Lower leg skin (tissue), 4 donors: ENCODE measurements at regions of chr5 and their contacts with region 1.

Region 1: GRCh38 chr5:75236322-75237316 is at the start of gene ANKRD31:
- DNase-seq: peak; percentile 71 to 96
- H3K4me3 ChIP-seq: peak within 1 kb of the TSS; percentile 53
- CTCF ChIP-seq: no peak
- POLR2A ChIP-seq: no peak
- total RNA-seq, gene ANKRD31: 0.13 to 0.20 (median 0.19) TPM in 3 of 4 donors, not detected in the other

Region 2: GRCh38 chr5:73448463-73449136 is 1788.0 kb before region 1 on chr5 and contains the start of gene FOXD1:
- intact Hi-C with region 1: no loop called
- DNase-seq: peak; percentile 58 to 95
- H3K4me3 ChIP-seq: peak within 1 kb of the TSS; percentile 25
- CTCF ChIP-seq: no peak
- POLR2A ChIP-seq: no peak
- total RNA-seq, gene FOXD1: 0.63 to 2.2 (median 1.8) TPM

Region 3: DNA sequence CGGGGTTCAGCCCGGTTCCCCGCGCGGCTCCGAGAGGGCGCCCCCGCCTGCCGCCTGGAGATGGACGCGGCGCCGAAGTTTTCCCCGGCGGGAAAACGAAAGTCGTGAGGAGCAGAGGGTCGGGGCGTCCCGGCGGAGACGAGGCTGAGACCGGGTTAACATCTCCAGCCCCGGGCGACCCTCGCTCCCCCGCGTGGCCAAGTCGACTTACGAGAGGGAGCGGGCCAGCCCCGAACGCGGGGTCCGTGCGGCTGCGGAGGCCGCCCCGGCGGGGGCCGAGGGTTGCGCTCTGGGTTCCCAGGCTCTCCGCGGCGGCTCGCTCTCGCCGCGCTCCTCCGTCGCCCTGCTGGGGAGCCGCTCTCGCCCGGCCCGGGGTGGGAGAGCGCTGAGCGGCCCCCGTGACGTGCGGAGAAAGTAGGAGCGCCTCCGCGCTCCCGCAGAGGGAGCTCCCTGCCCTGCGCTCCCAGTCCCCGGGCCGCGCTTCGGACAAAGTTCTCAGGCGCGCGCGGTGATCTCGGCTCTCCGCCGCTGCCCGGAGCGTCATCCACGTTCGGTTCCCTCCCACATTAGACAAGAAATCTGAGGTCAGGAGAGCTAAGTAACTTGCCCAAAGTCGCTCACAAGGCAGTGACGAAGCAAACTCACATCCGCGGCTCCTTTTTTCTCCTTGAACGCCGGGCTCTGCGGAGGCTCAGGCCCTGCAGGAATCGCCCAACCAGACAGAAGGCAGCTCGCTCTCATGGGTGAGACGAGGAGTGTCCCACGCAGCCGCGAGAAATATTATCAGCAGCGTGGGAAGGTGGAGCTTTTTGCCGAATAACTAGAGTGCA is 183.1 kb before region 1 on chr5:
- intact Hi-C with region 1: loop called (anchors 10 kb)
- DNase-seq: peak; percentile 42 to 90
- H3K4me3 ChIP-seq: peak overlapping the region; percentile 56
- CTCF ChIP-seq: no peak
- POLR2A ChIP-seq: no peak

Region 4: GRCh38 chr5:75336625-75337339 is 100.2 kb after region 1 on chr5 and contains the start of gene HMGCR:
- intact Hi-C with region 1: loop called (anchors 5 kb)
- DNase-seq: peak; percentile 99 to 100
- H3K4me3 ChIP-seq: peak within 1 kb of the TSS; percentile 93
- CTCF ChIP-seq: peak in 1 of 3 donors; percentile 7
- POLR2A ChIP-seq: no peak
- total RNA-seq, gene HMGCR: 101 to 119 (median 103) TPM

Region 5: DNA sequence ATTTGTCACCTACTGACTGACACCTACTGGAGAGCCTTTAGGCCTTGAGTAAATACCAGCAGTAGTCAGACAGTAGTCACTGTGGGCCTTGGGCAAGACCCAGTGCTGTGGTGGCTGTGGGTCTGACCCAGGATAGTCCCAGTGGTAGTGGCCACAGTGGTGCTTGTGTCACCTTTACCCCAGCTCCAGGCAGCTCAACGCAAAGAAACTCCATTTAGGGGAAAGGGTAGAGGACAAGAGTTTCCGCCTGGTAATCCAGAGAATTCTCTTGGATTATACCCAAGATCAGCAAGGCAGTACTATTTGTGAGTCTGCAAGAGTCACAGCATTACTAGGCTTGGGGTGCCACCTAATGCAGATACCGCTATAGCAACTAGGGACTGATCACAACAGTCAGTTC is 245.9 kb after region 1 on chr5:
- intact Hi-C with region 1: no loop called
- DNase-seq: no peak
- H3K4me3 ChIP-seq: no peak overlapping the region
- CTCF ChIP-seq: no peak
- POLR2A ChIP-seq: no peak

Region 6: DNA sequence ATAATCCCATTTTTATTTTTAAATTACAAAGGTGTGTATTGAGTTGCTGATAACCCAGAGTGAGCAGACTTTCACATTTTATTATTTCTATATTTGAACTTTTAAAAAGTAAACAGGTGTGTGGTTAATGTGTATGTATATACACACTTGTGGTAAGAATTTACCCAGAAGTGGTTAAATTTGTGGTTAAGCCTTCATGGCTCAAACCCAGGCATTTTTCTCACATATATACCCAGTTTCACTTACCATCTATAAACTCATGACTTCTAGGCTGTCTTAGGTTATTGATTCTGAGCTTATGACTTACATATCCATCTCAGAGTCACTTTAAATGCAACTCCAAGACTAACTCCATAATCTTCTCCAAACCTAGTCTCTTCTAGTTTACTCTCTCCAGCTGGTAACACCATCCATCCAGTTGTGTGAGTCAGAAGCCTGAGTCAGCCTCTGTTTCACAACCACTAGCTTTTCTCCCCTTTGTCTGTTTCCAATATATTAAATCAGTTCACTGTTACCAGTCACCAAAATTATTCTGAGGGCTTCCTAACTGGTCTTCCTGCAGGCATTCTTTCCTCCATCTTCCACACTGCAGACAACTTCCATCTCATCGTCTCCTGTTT is 1830.3 kb after region 1 on chr5:
- intact Hi-C with region 1: no loop called
- DNase-seq: no peak
- H3K4me3 ChIP-seq: no peak overlapping the region
- CTCF ChIP-seq: no peak
- POLR2A ChIP-seq: no peak